ENCODE measurements at regions of chr13 and their contacts with region 1.

Region 1: GRCh38 chr13:40777166-40777808 is 6.3 kb upstream of the MRPS31 start:
- DNase-seq: peak; percentile 55
- H3K4me3 Mint-ChIP-seq: peak overlapping the region; percentile 69
- H3K27ac Mint-ChIP-seq: peak overlapping the region; percentile 98
- H3K4me1 Mint-ChIP-seq: peaks cover 37% of the 10 kb centered on the region
- H3K27me3 Mint-ChIP-seq: no peaks in the 10 kb centered on the region

Region 2: DNA sequence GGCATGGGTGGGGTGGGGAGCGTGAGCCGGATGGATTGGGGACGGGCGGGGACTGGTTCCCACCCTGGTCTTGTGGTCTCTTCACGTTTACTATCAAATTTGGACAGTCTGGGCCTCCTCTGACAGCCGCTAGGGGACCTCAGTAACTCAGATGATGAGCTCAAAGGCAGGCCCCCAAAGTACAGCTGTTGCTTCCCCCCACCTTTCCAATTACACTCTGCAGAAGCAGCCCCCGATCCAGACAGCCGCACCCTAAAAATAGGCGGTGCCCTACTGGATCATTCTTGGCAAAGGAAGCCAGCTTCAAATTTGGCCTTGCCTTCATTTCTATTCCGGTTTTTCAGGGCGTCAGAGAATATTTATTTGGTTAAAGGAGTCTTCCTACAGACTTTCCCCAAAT is 109.0 kb before region 1 on chr13:
- CTCF ChIA-PET with region 1: interaction called, 11 read pairs
- DNase-seq: peak; percentile 54
- H3K4me3 Mint-ChIP-seq: peak overlapping the region; percentile 76
- H3K27ac Mint-ChIP-seq: peak overlapping the region; percentile 89
- H3K4me1 Mint-ChIP-seq: peaks cover 35% of the 10 kb centered on the region
- H3K27me3 Mint-ChIP-seq: no peaks in the 10 kb centered on the region

Region 3: DNA sequence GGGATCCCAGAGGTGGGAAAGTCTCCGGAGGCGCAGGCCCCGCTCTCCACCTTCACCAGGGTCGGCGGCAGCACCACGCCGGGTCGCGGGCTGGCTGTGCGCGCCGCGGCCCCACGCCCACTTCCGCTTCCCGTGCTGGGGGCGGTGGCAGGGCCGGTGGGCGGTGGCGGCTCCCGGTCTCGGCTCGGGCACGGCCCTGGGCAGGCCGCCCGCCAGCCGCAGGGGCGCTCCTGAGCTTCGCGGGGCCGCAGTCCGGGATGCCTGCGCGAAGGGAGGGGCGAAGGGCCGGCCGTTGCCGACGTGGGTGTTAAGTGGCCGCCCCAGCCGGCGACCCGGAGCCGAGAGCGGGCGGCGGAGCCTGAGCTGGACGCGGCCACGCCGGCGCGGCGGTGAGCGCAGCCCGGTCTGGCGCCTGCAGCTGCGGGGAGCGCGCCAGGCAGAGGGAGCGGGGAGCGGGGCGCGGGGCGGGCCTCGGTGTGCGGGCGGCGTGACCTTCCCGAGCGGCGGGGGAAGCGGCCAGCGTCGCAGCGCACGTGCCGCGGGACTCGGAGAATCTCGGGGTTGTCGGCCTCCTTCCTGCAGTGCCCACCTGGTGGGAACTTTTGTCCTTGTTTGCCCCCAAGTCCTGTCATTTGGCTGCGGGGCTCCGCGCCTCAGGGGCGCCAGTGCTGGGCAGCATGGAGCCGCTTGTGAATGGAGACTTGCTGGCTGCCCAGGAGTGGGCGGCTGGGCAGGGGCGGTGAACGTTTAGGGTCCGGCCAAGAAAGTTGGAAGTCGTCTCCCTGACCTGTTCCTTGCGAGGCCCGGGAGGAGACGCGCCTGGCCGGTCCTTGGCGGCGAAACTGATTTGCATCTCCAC is 12.2 kb after region 1 on chr13 and contains the start of gene SLC25A15:
- CTCF ChIA-PET with region 1: interaction called, 15 read pairs
- DNase-seq: peak; percentile 80
- H3K4me3 Mint-ChIP-seq: peak within 1 kb of the TSS; percentile 76
- H3K27ac Mint-ChIP-seq: peak within 1 kb of the TSS; percentile 60
- H3K4me1 Mint-ChIP-seq: peaks cover 35% of the 10 kb centered on the region
- H3K27me3 Mint-ChIP-seq: no peaks in the 10 kb centered on the region

Region 4: DNA sequence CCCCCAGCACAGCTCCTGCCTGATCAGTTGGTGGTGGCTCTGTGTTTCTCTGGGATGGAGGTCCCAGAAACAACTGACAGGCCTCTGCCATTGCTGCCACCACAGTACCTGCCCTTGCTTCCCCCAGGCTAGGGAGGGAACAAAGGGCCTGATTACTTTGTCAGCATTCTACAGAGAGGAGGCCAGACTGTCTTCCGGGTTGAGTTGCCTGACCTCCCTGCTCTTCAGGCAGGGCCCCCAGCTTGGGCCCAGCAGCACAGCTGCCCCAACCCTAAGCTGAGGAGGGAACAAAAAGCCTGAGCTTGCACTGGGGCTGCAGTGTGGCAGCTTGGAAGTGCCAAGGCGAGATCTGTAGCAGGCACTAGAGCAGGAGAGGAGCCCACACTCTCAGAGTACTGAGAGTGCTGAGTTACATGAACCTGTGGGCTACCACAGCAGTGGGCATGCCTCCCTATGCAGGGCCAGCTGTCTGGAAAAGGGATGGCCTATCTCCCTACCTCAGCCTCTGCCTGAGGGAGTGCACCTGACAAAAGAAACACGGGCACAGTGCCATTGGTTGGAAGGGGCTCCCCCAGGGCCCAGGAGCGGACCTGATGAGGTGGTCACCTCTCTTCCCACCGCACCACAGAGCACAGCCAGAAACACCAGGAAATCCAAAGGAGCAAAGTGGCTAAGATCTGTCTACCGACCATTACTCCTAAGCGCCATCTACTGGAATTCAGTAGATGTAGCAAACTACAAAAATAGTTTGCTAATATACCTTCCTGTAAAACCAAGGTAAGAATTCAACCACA is 36.6 kb after region 1 on chr13:
- CTCF ChIA-PET with region 1: interaction called, 12 read pairs
- DNase-seq: no peak
- H3K4me3 Mint-ChIP-seq: no peak overlapping the region
- H3K27ac Mint-ChIP-seq: no peak overlapping the region
- H3K4me1 Mint-ChIP-seq: no peaks in the 10 kb centered on the region
- H3K27me3 Mint-ChIP-seq: no peaks in the 10 kb centered on the region

Region 5: GRCh38 chr13:41263261-41264027 is 486.2 kb after region 1 on chr13 and contains the start of gene MTRF1:
- CTCF ChIA-PET with region 1: no interaction called
- DNase-seq: peak; percentile 86
- H3K4me3 Mint-ChIP-seq: peak within 1 kb of the TSS; percentile 85
- H3K27ac Mint-ChIP-seq: peak within 1 kb of the TSS; percentile 92
- H3K4me1 Mint-ChIP-seq: peaks cover 20% of the 10 kb centered on the region
- H3K27me3 Mint-ChIP-seq: no peaks in the 10 kb centered on the region